ENCODE measurements at regions of chr1 and their contacts with region 1.

Region 1: GRCh38 chr1:12658531-12659453 is 14.9 kb downstream of the AADACL4 start:
- DNase-seq: peak; percentile 10
- H3K4me3 ChIP-seq: no peak overlapping the region
- H3K27me3 ChIP-seq: no peaks in the 10 kb centered on the region; the same call in 1 of the 2 replicates
- CTCF ChIP-seq: peak; percentile 91

Region 2: GRCh38 chr1:12275369-12275768 is 383.4 kb before region 1 on chr1:
- CTCF ChIA-PET with region 1: interaction called, 64 read pairs
- POLR2A ChIA-PET with region 1: no interaction called
- DNase-seq: no peak
- H3K4me3 ChIP-seq: no peak overlapping the region
- H3K27me3 ChIP-seq: no peaks in the 10 kb centered on the region
- CTCF ChIP-seq: peak; percentile 82

Region 3: GRCh38 chr1:12314333-12314903 is 344.4 kb before region 1 on chr1:
- CTCF ChIA-PET with region 1: interaction called, 83 read pairs
- POLR2A ChIA-PET with region 1: no interaction called
- DNase-seq: no peak
- H3K4me3 ChIP-seq: no peak overlapping the region
- H3K27me3 ChIP-seq: no peaks in the 10 kb centered on the region
- CTCF ChIP-seq: peak; percentile 37; the same call in 1 of the 2 replicates

Region 4: DNA sequence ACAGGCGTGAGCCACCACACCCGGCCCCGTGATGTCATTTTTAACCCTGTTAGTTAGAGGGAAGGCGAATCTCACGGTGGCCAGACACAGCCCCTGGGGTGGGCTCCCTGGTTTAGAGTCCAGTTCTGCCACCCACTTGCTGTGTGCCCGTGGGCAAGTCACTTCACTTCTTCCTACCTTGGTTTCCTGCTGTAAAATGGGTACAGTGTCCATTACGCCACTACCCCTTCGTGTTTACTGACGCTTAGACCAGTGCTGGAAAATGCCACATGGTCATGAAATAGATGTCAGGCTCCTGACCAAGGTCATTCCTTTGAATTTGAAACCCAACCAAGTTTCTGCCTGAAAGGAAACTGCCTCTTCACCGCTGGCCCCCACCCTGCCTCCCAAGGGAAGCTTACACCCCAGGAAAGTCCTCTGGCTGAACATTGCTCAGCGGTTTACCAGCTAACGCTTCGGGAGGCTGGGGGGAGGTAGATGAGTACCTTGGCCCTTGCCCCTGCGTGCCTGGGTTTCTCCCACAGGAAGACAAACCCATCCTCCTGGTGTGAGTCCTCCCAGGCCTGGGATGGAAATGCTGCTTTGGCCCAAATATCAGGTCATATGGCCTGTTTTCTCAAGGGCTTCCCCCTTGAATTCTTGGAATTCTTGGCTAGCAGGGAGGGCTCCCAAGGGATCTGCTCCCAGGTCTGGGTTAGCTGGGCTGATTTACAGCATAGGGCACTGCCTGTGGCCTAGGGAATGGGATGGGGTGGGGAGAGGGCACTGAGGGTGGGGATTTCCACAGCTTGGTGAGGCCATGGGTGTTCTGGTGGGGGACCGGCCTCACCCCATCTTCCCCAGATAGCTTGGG is 22.5 kb before region 1 on chr1:
- CTCF ChIA-PET with region 1: no interaction called
- POLR2A ChIA-PET with region 1: no interaction called
- DNase-seq: no peak
- H3K4me3 ChIP-seq: no peak overlapping the region
- H3K27me3 ChIP-seq: no peaks in the 10 kb centered on the region
- CTCF ChIP-seq: no peak

Region 5: DNA sequence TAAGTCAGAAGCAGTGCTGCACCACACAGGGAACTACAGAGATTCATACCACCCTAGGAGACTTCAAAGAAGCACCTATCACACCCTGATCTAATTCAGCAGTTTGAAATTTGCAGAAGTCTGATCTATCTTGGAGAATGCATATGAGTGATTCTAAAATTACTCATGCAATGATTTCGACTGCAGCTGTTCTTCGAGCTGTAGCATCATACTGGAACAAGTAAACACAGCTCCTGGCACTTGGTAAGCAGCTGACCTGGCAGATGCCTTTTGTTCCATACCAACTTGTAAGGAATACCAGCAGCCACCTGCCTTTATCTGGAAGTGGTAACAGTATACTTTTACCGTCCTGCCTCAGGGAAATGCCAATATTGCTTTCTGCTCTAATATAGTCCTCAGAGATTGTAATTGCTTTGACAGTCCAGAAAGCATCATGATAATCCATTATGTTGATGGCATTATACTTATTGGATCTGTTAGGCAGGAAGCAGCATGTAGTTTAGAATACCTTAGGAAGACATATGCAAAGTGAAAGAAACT is 10.8 kb after region 1 on chr1:
- CTCF ChIA-PET with region 1: interaction called, 25 read pairs
- POLR2A ChIA-PET with region 1: no interaction called
- DNase-seq: no peak
- H3K4me3 ChIP-seq: no peak overlapping the region
- H3K27me3 ChIP-seq: no peaks in the 10 kb centered on the region
- CTCF ChIP-seq: no peak

Measured in BJ (cell line).